GM12878 (cell line): ENCODE measurements at regions of chr17 and their contacts with region 1.

Region 1: GRCh38 chr17:28842282-28843012 is at the start of gene FAM222B:
- DNase-seq: peak; percentile 51
- ATAC-seq: peak; percentile 99
- H3K4me3 ChIP-seq: peak within 1 kb of the TSS; percentile 98
- H3K27ac ChIP-seq: peak within 1 kb of the TSS; percentile 59
- H3K4me1 ChIP-seq: no peaks in the 10 kb centered on the region
- H3K27me3 ChIP-seq: no peaks in the 10 kb centered on the region
- CTCF ChIP-seq: 0 out of 6 replicates have a peak, but pooled peaks of 1 of the 3 experiments have one; percentile 1
- EP300 ChIP-seq: no peak
- POLR2A ChIP-seq: peak; percentile 87
- RAD21 ChIP-seq: no peak
- polyA plus RNA-seq, gene FAM222B: 2.8 to 2.9 TPM

Region 2: GRCh38 chr17:28788100-28788499 is 54.3 kb before region 1 on chr17:
- CTCF ChIA-PET with region 1: no interaction called
- POLR2A ChIA-PET with region 1: no interaction called
- RAD21 ChIA-PET with region 1: no interaction called
- SMC1A ChIA-PET with region 1: interaction called, 3 read pairs
- in situ Hi-C with region 1: no loop called
- intact Hi-C with region 1: loop called (anchors 10 kb)
- DNase-seq: no peak
- ATAC-seq: no peak
- H3K4me3 ChIP-seq: no peak overlapping the region
- H3K27ac ChIP-seq: no peak overlapping the region
- H3K4me1 ChIP-seq: no peaks in the 10 kb centered on the region
- H3K27me3 ChIP-seq: no peaks in the 10 kb centered on the region
- CTCF ChIP-seq: no peak
- EP300 ChIP-seq: no peak
- POLR2A ChIP-seq: no peak
- RAD21 ChIP-seq: no peak

Region 3: DNA sequence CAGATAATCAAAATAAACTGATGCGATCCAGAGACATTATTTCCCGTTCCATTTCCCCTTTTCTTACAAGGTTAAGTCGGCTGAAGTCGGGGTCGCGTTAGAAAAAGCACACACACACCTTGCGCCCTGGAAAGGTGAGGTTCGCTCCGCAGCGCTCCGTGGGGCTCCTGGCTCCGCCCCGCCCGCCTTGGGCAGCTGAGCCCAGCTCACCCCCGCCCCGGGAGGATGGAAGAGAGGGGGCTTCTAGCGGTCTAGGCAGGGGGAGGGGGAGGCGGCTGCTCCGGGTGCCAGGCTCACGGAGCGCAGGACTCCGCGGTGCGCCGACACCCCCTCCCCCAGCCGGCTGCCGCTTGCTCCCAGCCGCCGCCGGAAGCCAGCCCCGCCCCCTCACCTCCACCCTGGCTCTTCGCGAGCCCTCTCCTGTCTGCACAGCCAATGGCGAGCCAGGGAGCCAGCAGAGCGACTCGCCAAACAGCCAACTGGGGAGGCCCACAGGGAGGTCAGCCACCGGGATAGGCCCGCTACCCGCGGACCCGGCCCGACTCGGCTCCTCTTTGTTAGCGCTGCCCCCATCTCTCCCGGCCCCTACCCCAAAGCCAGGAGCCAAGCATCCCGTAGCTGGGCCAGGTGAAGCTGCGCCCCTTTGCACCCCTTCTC is 30.2 kb before region 1 on chr17:
- CTCF ChIA-PET with region 1: interaction called, 6 read pairs
- POLR2A ChIA-PET with region 1: interaction called, 7 read pairs
- RAD21 ChIA-PET with region 1: interaction called, 6 read pairs
- SMC1A ChIA-PET with region 1: interaction called, 13 read pairs
- in situ Hi-C with region 1: no loop called
- intact Hi-C with region 1: no loop called
- DNase-seq: peak; percentile 78
- ATAC-seq: peak; percentile 100
- H3K4me3 ChIP-seq: peak overlapping the region; percentile 75
- H3K27ac ChIP-seq: peak overlapping the region; percentile 74
- H3K4me1 ChIP-seq: peaks cover 18% of the 10 kb centered on the region
- H3K27me3 ChIP-seq: no peaks in the 10 kb centered on the region
- CTCF ChIP-seq: no peak
- EP300 ChIP-seq: no peak
- POLR2A ChIP-seq: peak; percentile 70; the same call in 1 of the 2 replicates
- RAD21 ChIP-seq: no peak

Region 4: DNA sequence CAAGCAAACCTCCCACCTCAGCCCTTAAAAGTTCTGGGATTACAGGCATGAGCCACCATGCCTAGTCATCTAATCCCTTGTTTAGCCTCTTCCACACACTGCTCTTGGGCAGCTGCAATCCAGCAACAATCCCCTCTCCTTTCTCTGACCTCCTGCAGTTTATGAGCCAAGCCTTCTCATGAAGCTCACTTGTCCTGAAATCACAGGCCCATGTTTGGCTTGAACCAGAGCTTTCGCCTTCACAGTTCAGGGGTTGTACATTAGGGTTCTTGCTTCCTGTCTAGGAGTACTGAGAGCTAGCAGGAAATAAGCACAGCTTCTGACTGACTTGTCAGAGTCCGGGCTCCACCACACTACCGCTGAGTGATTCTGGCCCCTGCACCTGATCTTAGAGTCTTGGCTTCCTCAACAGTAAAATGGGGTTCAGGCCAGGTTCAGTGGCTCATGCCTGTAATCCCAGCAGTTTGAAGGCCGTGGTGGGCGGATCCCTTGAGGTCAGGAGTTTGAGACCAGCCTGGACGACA is 28.7 kb after region 1 on chr17:
- CTCF ChIA-PET with region 1: interaction called, 5 read pairs
- POLR2A ChIA-PET with region 1: interaction called, 6 read pairs
- RAD21 ChIA-PET with region 1: interaction called, 10 read pairs
- SMC1A ChIA-PET with region 1: no interaction called
- in situ Hi-C with region 1: no loop called
- intact Hi-C with region 1: no loop called
- DNase-seq: peak; percentile 79
- ATAC-seq: peak; percentile 99
- H3K4me3 ChIP-seq: no peak overlapping the region
- H3K27ac ChIP-seq: peak overlapping the region; percentile 61
- H3K4me1 ChIP-seq: peaks cover 15% of the 10 kb centered on the region
- H3K27me3 ChIP-seq: no peaks in the 10 kb centered on the region
- CTCF ChIP-seq: no peak
- EP300 ChIP-seq: no peak
- POLR2A ChIP-seq: peak; percentile 61
- RAD21 ChIP-seq: peak; percentile 25; the same call in 1 of the 2 replicates

Region 5: DNA sequence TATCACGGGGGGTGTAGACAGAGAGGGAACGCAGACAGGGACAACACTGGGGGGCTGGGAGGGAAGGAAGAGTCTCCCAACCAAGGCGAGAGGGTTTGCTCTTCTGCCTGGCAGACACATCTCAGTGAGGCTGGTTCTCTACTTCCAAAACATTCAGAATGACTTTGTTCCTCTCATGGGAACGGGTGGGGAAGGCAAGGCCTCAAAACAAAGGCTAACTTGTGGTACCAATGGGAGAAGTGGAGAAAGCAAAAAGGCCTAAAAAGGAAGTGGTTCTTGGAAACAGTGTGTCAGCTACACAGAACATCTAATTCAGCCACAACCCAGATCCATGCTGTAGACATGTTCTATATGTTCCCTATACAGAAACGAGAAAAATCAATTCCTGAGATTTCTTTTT is 47.5 kb after region 1 on chr17:
- CTCF ChIA-PET with region 1: interaction called, 4 read pairs
- POLR2A ChIA-PET with region 1: interaction called, 23 read pairs
- RAD21 ChIA-PET with region 1: interaction called, 16 read pairs
- SMC1A ChIA-PET with region 1: interaction called, 4 read pairs
- in situ Hi-C with region 1: no loop called
- intact Hi-C with region 1: no loop called
- DNase-seq: no peak
- ATAC-seq: no peak
- H3K4me3 ChIP-seq: no peak overlapping the region
- H3K27ac ChIP-seq: no peak overlapping the region
- H3K4me1 ChIP-seq: peaks cover 59% of the 10 kb centered on the region
- H3K27me3 ChIP-seq: no peaks in the 10 kb centered on the region
- CTCF ChIP-seq: no peak
- EP300 ChIP-seq: no peak
- POLR2A ChIP-seq: no peak
- RAD21 ChIP-seq: no peak

Region 6: GRCh38 chr17:28896884-28897768 is 54.7 kb after region 1 on chr17 and contains the start of gene FLOT2:
- CTCF ChIA-PET with region 1: interaction called, 13 read pairs
- POLR2A ChIA-PET with region 1: interaction called, 23 read pairs
- RAD21 ChIA-PET with region 1: interaction called, 16 read pairs
- SMC1A ChIA-PET with region 1: interaction called, 8 read pairs
- in situ Hi-C with region 1: no loop called
- intact Hi-C with region 1: no loop called
- DNase-seq: no peak
- ATAC-seq: peak; percentile 43
- H3K4me3 ChIP-seq: peak within 1 kb of the TSS; percentile 92
- H3K27ac ChIP-seq: peak within 1 kb of the TSS; percentile 72
- H3K4me1 ChIP-seq: peaks cover 39% of the 10 kb centered on the region
- H3K27me3 ChIP-seq: no peaks in the 10 kb centered on the region
- CTCF ChIP-seq: peak in 2 of 3 experiments; percentile 11 to 17; a peak in 2 of 6 replicates
- EP300 ChIP-seq: no peak
- POLR2A ChIP-seq: peak; percentile 71
- RAD21 ChIP-seq: no peak
- polyA plus RNA-seq, gene FLOT2: 56.8 to 121 TPM

Region 7: GRCh38 chr17:28902819-28903545 is 60.5 kb after region 1 on chr17 and contains the start of gene DHRS13:
- CTCF ChIA-PET with region 1: interaction called, 13 read pairs
- POLR2A ChIA-PET with region 1: interaction called, 20 read pairs
- RAD21 ChIA-PET with region 1: interaction called, 16 read pairs
- SMC1A ChIA-PET with region 1: interaction called, 8 read pairs
- in situ Hi-C with region 1: no loop called
- intact Hi-C with region 1: no loop called
- DNase-seq: peak; percentile 81
- ATAC-seq: peak; percentile 91
- H3K4me3 ChIP-seq: peak within 1 kb of the TSS; percentile 82
- H3K27ac ChIP-seq: no peak within 1 kb of the TSS; the same call in 1 of the 2 replicates
- H3K4me1 ChIP-seq: peaks cover 16% of the 10 kb centered on the region
- H3K27me3 ChIP-seq: no peaks in the 10 kb centered on the region
- CTCF ChIP-seq: peak; percentile 89 to 100 (median 97)
- EP300 ChIP-seq: peak in 1 of 2 experiments; percentile 51; a peak in 1 of 4 replicates
- POLR2A ChIP-seq: peak; percentile 70
- RAD21 ChIP-seq: peak; percentile 54
- polyA plus RNA-seq, gene DHRS13: 0.18 TPM in 1 of 2 experiments, not detected in the other

Region 8: GRCh38 chr17:29019475-29020181 is 177.2 kb after region 1 on chr17:
- CTCF ChIA-PET with region 1: no interaction called
- POLR2A ChIA-PET with region 1: no interaction called
- RAD21 ChIA-PET with region 1: no interaction called
- SMC1A ChIA-PET with region 1: no interaction called
- in situ Hi-C with region 1: no loop called
- intact Hi-C with region 1: no loop called
- DNase-seq: no peak
- ATAC-seq: peak; percentile 40
- H3K4me3 ChIP-seq: no peak overlapping the region
- H3K27ac ChIP-seq: no peak overlapping the region
- H3K4me1 ChIP-seq: no peaks in the 10 kb centered on the region
- H3K27me3 ChIP-seq: peaks cover 2 to 6% of the 10 kb centered on the region in 2 experiments
- CTCF ChIP-seq: no peak
- EP300 ChIP-seq: no peak
- POLR2A ChIP-seq: no peak
- RAD21 ChIP-seq: no peak